Calu3 (cell line): ENCODE measurements at regions of chr11 and their contacts with region 1.

Region 1: GRCh38 chr11:66311965-66312548 is 4.8 kb downstream of the CD248 start:
- DNase-seq: peak; percentile 90
- H3K4me3 Mint-ChIP-seq: peak overlapping the region; percentile 90
- H3K27ac Mint-ChIP-seq: peak overlapping the region; percentile 83
- H3K4me1 Mint-ChIP-seq: peaks cover 9% of the 10 kb centered on the region
- H3K27me3 Mint-ChIP-seq: peaks cover 49% of the 10 kb centered on the region
- CTCF ChIP-seq: peak; percentile 75

Region 2: DNA sequence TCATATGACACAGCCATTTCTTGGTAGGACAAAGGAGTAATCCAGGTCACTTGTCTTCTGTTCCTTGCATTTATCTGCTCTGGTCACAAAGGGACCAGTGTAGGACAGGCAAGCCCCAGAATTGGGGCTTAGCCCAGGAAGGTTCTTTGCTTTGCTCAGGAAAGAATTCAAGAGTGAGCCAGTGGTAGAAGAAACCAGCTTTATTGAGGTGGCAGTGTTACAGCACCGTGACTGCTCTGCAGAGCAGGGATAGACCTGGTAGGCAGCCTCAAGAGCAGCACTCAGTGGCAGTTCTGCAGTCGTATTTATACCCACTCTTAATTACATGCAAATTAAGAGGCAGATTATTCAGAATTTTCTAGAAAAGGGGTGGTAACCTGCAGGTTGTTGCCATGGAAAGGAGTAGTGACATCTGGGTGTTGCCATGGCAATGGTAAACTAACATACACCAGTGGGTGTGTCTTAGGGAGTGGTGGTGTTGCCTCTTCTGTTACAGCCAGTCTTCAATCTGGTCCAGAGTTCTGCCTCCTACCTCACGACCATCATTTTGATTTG is 128.5 kb before region 1 on chr11:
- CTCF ChIA-PET with region 1: no interaction called
- intact Hi-C with region 1: no loop called
- DNase-seq: no peak
- H3K4me3 Mint-ChIP-seq: no peak overlapping the region
- H3K27ac Mint-ChIP-seq: no peak overlapping the region
- H3K4me1 Mint-ChIP-seq: no peaks in the 10 kb centered on the region
- H3K27me3 Mint-ChIP-seq: no peaks in the 10 kb centered on the region
- CTCF ChIP-seq: no peak

Region 3: DNA sequence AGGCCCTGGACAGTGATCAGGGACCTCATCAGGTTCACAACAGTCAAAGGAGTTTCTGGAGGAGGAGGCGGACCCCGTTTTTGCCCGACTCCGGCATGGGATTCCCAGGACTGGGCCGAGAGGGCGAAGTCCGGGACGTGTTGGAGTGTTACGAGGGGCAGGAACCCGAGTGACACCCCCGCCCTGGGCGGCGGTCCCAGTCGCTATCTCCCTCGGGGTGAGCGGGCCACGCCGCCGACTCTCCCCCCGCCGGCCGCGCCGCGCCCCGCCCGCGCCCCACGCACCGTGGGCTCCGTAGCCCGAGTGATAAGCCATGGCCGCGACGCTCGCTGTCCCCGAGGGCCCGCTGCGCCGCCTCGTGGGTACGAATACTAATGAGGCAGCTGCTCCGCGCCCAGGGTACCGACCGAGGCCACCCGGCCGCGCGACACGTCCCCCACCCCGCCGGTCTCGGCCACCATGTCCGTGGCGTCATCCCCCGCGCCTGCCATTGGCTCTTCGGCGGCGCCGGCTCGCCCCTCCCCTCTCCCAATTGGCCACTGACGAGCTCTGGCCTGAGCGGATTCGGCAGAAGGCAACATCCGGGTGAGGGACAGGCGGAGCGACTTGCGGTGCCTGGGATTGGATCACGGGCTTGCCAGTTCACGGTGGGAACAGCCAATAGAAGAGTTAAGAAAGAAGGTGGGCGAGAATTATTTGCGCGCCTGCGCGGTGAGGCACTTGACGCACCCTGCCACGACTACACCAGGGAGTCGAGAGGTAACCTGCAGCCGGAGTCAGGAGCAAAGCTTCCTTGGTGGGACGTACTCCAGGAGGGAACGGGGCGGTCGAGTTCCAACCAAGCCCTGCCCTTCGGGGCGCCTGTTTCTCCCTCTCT is 23.1 kb before region 1 on chr11 and contains the start of gene YIF1A:
- CTCF ChIA-PET with region 1: interaction called, 11 read pairs
- intact Hi-C with region 1: no loop called
- DNase-seq: peak; percentile 98
- H3K4me3 Mint-ChIP-seq: peak within 1 kb of the TSS; percentile 80
- H3K27ac Mint-ChIP-seq: peak within 1 kb of the TSS; percentile 90
- H3K4me1 Mint-ChIP-seq: peaks cover 31% of the 10 kb centered on the region
- H3K27me3 Mint-ChIP-seq: peaks cover 31% of the 10 kb centered on the region
- CTCF ChIP-seq: no peak
- total RNA-seq, gene YIF1A: 98.8 and 106 TPM in 2 replicates

Region 4: DNA sequence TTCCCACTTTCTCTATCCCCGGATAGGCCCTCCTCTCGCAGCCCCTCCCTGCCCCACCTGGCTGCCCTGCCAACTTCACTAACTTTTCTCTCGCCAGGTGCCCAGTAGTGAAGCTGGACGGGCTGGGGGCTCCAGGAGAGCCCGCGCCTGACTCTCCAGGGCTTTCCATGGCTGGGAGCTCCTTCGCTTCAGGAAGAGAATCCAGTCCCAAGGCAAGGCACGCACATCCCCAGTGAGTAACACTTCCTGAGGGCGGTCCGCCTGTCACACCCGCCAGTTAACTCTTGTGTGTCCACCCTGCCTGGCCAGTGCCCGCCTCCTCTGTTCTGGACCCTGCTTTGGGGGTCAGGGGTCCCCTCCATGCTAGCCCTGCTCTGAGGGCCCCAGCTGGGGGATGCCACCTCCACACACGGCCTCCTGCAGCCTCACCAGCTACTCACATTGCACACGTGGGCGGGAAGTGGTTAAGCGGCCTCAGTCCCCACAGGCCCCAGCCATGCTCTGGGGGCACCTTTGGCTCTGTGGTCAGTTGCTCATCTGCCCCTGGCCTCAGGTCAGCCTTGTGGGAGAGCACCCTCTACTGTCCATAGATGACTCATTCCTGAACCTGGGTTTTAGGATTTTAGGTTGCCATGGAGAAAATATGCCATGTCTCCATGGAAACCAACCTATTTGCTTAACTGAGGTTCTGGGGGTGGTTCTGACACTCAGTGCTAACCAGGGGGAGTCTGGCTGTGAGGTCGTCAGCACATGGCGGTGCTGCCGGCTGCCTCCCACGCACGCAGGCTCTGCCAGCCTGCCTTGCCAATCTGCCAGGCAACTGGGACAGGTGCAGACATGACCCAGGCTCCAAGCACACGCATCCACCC is 24.4 kb after region 1 on chr11 and contains the start of gene RIN1:
- CTCF ChIA-PET with region 1: interaction called, 32 read pairs
- intact Hi-C with region 1: no loop called
- DNase-seq: peak; percentile 76
- H3K4me3 Mint-ChIP-seq: peak within 1 kb of the TSS; percentile 94
- H3K27ac Mint-ChIP-seq: peak within 1 kb of the TSS; percentile 86
- H3K4me1 Mint-ChIP-seq: peaks cover 24% of the 10 kb centered on the region
- H3K27me3 Mint-ChIP-seq: no peaks in the 10 kb centered on the region
- CTCF ChIP-seq: no peak
- total RNA-seq, gene RIN1: 17.6 and 23.7 TPM in 2 replicates

Region 5: GRCh38 chr11:66386171-66387069 is 74.4 kb after region 1 on chr11:
- CTCF ChIA-PET with region 1: interaction called, 23 read pairs
- intact Hi-C with region 1: loop called (anchors 2 kb)
- DNase-seq: peak; percentile 87
- H3K4me3 Mint-ChIP-seq: peak overlapping the region; percentile 41
- H3K27ac Mint-ChIP-seq: no peak overlapping the region
- H3K4me1 Mint-ChIP-seq: peaks cover 8% of the 10 kb centered on the region
- H3K27me3 Mint-ChIP-seq: peaks cover 21% of the 10 kb centered on the region
- CTCF ChIP-seq: peak; percentile 86

Region 6: DNA sequence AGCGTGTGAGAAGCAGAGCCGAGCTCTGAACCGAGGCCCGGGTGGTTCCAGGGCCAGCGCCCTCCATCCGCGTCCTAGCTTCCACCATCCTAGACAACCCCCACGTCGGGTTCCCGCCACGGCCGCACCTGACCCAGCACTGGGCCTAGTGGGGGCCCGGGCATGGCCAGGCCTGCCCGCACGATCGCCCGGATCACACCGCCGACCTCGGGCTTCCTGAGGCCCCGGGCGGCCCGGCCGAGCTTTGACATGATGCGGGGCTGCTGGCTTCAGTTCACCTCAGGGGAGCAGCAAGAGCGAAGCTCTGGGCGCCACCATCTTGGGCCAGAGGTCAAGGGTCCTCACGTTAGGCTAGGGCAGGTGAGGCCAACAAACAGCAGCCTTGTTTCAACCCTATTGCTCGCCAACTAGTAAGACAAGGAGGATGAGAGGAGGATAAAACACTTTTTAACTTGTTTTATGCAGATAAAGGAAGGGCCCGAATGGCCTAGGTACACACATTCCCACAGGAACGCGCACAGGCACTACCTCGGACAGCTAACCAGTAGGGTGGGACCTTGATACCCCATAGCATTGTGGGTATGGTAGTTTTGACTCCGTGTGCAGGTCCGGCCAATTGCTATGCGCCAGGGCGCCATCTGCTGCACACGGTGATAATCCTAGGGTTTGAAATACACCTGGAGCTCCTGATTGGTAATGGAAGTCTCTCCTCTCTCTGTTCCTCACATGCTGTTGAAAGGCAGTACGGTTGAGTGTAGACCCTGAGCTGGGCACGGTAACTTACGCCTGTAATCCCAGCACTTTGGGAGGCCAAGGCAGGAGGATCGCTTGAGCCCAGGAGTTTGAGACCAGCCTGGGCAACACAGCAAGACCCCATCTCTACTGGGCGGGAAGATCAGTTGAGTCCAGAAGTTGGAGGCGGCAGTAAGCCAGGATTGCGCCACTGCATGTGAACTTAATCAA is 126.7 kb after region 1 on chr11 and contains the start of gene MRPL11:
- CTCF ChIA-PET with region 1: interaction called, 10 read pairs
- intact Hi-C with region 1: no loop called
- DNase-seq: peak; percentile 93
- H3K4me3 Mint-ChIP-seq: peak within 1 kb of the TSS; percentile 86
- H3K27ac Mint-ChIP-seq: peak within 1 kb of the TSS; percentile 87
- H3K4me1 Mint-ChIP-seq: no peaks in the 10 kb centered on the region
- H3K27me3 Mint-ChIP-seq: peaks cover 20% of the 10 kb centered on the region
- CTCF ChIP-seq: peak; percentile 59
- total RNA-seq, gene MRPL11: 76.1 and 79.6 TPM in 2 replicates